ENCODE measurements at regions of chr22 and their contacts with region 1.

Region 1: GRCh38 chr22:45107671-45108070 is 56.1 kb upstream of the NUP50 start:
- H3K4me3 ChIP-seq: no peak overlapping the region
- H3K27ac ChIP-seq: no peak overlapping the region
- H3K4me1 ChIP-seq: no peaks in the 10 kb centered on the region
- CTCF ChIP-seq: no peak

Region 2: DNA sequence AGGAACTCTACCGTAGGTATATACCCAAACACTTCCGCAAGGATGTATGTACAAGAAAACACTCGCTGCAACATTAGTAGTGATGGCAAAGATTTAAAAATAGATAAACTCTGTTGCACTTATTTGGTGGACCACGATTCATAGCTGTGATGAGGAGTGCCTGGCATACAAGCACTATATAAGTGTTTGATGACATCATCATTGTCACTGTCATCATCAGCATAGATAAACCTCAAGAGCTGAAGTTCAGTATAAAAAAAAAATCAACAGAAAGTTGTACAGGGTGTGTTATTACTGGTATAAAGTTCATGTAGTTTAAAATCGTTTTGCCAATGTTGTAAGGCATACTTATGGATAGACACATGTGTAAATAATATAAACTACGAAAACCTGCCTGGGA is 32.0 kb after region 1 on chr22:
- CTCF ChIA-PET with region 1: interaction called, 3 read pairs
- POLR2A ChIA-PET with region 1: interaction called, 10 read pairs
- H3K4me3 ChIP-seq: no peak overlapping the region
- H3K27ac ChIP-seq: no peak overlapping the region
- H3K4me1 ChIP-seq: no peaks in the 10 kb centered on the region
- CTCF ChIP-seq: no peak

Region 3: DNA sequence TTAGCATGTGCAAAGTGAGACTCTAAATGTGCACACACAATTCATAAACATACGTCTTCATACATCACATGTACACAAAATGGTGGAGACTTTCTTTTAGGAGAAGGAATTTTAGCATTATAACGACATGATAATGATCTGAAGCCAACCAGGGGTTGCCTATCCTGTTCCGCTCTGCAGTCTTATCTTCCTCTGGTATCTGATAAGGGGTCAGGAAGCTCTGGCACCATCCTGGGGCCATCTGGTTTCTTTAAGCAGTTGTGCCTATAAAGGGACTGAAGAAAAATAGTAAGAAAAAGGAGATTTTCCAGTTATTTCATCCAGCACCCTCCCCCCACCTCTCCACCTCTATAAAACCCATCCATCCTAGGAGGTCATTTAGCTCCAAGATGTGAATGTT is 50.2 kb after region 1 on chr22:
- CTCF ChIA-PET with region 1: no interaction called
- POLR2A ChIA-PET with region 1: no interaction called
- H3K4me3 ChIP-seq: no peak overlapping the region
- H3K27ac ChIP-seq: no peak overlapping the region
- H3K4me1 ChIP-seq: peaks cover 23% of the 10 kb centered on the region
- CTCF ChIP-seq: no peak